ENCODE measurements at regions of chr11 and their contacts with region 1.

Region 1: DNA sequence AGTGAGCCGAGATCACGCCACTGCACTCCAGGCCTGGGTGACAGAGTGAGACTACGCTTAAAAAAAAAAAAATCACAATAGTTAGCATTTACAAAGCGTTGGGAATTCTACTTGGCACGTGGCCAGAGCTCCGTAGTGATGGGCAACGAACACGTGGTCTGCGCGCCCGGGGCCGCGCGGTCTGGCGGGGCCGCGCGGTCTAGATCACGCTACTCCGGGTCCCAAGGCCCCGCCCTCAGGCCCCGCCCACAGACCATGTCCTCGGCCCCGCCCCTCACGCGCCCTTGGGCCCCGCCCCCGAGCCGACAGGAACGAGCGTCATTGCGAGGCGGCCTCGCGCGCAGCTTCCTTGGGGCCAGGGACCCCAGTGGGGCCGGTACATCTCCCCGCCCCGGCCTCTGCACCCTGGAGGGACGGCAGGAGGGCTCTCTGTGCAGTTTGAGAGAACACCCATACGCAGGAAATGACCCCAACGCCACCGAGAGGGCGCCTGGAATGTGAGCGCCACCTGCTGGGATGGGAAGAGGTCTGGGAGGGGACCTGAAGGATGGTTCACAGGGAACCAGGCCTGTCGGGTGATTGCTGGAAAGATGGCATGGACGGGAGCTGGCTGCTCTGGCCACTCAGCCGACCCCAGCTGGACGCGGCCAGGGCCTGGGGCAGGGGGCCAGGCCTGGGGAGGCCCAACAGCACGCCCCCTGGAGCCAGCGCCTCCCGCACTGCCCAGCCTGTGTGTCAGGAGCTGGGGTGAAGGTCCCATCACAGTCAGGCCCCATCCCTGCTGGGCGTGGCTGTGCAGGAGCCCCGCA is 2.0 kb upstream of the PTDSS2 start:
- DNase-seq: peak; percentile 96 to 97
- H3K4me3 ChIP-seq: peak overlapping the region; percentile 39
- H3K4me3 Mint-ChIP-seq: peak overlapping the region; percentile 85
- H3K27ac Mint-ChIP-seq: peak overlapping the region; percentile 77
- H3K4me1 ChIP-seq: peaks cover 41% of the 10 kb centered on the region
- H3K4me1 Mint-ChIP-seq: peaks cover 32% of the 10 kb centered on the region
- H3K27me3 ChIP-seq: no peaks in the 10 kb centered on the region
- H3K27me3 Mint-ChIP-seq: no peaks in the 10 kb centered on the region
- CTCF ChIP-seq: peak; percentile 90 to 98

Region 2: DNA sequence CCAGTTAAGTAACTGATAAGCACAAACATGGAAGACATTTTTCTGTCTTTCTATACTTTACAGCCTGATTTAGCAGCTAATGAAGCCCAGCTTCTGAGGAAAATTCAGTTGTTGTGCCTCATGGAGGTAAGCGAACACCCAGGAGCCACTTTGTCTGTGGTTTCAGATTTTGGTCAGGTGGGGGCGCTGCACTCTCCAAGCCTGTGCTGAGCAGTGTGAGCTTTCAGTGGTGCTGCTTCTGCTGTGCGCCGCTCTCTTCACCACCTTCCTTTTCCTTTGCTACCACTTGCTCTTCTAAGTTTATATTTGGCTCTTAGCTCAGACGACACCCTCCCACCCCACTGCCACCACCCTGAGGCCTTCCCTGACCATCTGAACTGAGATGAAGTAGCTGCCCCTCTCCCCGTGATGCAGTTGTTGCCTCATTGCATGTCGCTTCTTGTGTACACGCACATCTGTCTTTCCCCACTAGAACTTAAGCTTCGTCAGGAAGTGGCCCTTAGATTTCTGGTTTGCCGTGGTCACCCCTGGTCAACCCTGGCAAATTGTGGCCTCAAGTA is 197.3 kb before region 1 on chr11:
- CTCF ChIA-PET with region 1: interaction called, 13 read pairs
- POLR2A ChIA-PET with region 1: no interaction called
- intact Hi-C with region 1: no loop called
- DNase-seq: peak; percentile 57 to 73
- H3K4me3 ChIP-seq: no peak overlapping the region
- H3K4me3 Mint-ChIP-seq: no peak overlapping the region
- H3K27ac Mint-ChIP-seq: no peak overlapping the region
- H3K4me1 ChIP-seq: no peaks in the 10 kb centered on the region
- H3K4me1 Mint-ChIP-seq: no peaks in the 10 kb centered on the region
- H3K27me3 ChIP-seq: no peaks in the 10 kb centered on the region
- H3K27me3 Mint-ChIP-seq: no peaks in the 10 kb centered on the region
- CTCF ChIP-seq: peak; percentile 54 to 66

Region 3: DNA sequence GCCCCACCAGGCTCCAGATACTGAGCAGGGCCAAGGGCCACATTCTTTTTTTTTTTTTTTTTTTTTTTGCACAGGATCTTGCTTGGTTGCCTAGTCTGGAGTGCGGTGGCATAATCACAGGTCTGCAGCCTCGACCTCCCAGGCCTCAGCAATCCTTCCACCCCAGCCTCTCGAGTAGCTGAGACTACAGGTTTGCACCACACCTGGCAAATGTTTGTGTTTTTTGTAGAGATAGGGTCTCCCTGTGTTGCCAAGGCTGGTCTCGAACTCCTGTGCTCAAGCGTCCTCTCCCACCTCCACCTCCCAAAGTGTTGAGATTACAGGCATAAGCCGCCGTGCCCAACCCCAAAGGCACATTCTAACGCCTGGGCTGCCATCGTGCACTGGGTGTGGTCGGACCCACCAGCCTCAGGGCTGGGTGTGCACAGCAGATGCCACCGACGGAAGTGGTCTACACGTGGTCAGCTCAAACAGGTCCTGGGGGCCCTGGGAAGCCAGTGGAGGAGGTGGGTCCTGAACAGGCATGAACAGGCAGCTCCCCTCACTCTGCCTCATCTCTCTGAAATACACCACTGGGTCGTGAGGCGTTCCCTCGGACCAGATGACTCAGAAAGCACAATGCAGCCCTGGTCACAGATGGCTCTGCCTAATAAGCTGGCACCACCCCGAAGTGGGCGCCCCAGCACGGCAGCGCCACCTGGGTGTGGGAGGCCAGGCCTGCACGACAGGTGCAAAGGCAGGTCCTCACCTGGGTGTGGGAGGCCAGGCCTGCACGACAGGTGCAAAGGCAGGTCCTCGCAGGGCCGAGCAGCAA is 84.0 kb before region 1 on chr11:
- CTCF ChIA-PET with region 1: interaction called, 14 read pairs
- POLR2A ChIA-PET with region 1: no interaction called
- intact Hi-C with region 1: loop called (anchors 10 kb)
- DNase-seq: peak; percentile 85 to 89
- H3K4me3 ChIP-seq: no peak overlapping the region
- H3K4me3 Mint-ChIP-seq: no peak overlapping the region
- H3K27ac Mint-ChIP-seq: no peak overlapping the region
- H3K4me1 ChIP-seq: peaks cover 8% of the 10 kb centered on the region
- H3K4me1 Mint-ChIP-seq: peaks cover 7% of the 10 kb centered on the region
- H3K27me3 ChIP-seq: no peaks in the 10 kb centered on the region
- H3K27me3 Mint-ChIP-seq: peaks cover 2% of the 10 kb centered on the region
- CTCF ChIP-seq: peak; percentile 54 to 62

Region 4: DNA sequence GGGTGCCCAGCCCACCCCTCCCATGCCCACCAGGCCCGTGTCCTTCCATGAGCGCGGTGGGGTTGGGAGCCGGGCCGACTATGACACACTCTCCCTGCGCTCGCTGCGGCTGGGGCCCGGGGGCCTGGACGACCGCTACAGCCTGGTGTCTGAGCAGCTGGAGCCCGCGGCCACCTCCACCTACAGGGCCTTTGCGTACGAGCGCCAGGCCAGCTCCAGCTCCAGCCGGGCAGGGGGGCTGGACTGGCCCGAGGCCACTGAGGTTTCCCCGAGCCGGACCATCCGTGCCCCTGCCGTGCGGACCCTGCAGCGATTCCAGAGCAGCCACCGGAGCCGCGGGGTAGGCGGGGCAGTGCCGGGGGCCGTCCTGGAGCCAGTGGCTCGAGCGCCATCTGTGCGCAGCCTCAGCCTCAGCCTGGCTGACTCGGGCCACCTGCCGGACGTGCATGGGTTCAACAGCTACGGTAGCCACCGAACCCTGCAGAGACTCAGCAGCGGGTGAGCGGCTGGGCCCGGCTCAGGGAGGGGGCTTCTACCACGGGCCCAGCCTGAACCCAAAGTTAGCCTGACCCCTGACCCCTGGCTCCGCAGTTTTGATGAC is 51.1 kb before region 1 on chr11:
- CTCF ChIA-PET with region 1: interaction called, 10 read pairs
- POLR2A ChIA-PET with region 1: interaction called, 10 read pairs
- intact Hi-C with region 1: loop called (anchors 10 kb)
- DNase-seq: no peak
- H3K4me3 ChIP-seq: no peak overlapping the region
- H3K4me3 Mint-ChIP-seq: no peak overlapping the region
- H3K27ac Mint-ChIP-seq: no peak overlapping the region
- H3K4me1 ChIP-seq: peaks cover 22% of the 10 kb centered on the region
- H3K4me1 Mint-ChIP-seq: peaks cover 8% of the 10 kb centered on the region
- H3K27me3 ChIP-seq: no peaks in the 10 kb centered on the region
- H3K27me3 Mint-ChIP-seq: no peaks in the 10 kb centered on the region
- CTCF ChIP-seq: no peak

Region 5: DNA sequence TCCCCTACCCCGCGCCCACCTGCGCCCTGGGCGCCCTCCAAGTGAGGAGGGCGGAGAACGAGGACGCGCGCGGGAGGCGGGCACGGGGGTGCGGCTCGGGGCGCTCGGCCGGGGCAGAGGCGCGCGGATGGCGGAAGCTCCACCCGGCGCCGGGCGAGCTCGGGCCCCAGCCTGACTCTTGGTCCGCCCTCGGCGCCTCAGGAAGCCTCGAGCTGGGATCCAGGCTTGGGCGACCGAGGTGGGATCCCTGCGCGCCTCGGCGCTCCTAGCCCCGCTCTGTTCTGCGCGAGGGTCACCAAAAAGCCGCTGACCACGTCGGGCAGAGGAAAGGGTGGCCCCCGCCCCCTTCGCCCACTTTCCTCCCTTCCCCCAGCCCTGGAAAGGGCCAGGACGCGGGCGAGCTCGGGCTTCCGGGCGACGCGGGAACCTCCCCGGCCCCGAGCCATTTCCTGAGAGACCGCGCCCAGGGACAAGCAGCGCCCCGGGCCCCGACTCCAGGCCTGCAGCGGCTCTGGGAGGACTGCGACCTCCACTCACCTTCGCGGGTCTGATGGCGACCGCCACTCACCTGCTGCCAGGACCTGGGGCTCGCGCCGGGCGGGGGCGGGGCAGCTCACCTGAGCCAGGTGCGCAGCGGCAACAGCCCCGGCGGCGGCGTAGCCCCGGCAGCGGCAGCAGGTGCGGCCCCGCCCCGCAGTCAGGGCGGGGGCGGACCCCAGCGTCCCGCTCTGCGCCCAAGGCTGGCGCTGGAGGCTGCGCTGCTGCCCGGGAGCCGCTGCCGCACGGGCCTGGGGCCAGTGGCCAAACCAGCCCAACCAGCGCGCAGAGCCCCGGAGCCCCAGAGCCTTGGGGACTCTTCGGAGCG is 31.1 kb before region 1 on chr11:
- CTCF ChIA-PET with region 1: interaction called, 43 read pairs
- POLR2A ChIA-PET with region 1: interaction called, 5 read pairs
- intact Hi-C with region 1: loop called (anchors 1 kb)
- DNase-seq: peak; percentile 87 to 94
- H3K4me3 ChIP-seq: peak overlapping the region; percentile 96
- H3K4me3 Mint-ChIP-seq: peak overlapping the region; percentile 82
- H3K27ac Mint-ChIP-seq: peak overlapping the region; percentile 89
- H3K4me1 ChIP-seq: peaks cover 23% of the 10 kb centered on the region
- H3K4me1 Mint-ChIP-seq: peaks cover 11% of the 10 kb centered on the region
- H3K27me3 ChIP-seq: no peaks in the 10 kb centered on the region
- H3K27me3 Mint-ChIP-seq: no peaks in the 10 kb centered on the region
- CTCF ChIP-seq: no peak

Region 6: DNA sequence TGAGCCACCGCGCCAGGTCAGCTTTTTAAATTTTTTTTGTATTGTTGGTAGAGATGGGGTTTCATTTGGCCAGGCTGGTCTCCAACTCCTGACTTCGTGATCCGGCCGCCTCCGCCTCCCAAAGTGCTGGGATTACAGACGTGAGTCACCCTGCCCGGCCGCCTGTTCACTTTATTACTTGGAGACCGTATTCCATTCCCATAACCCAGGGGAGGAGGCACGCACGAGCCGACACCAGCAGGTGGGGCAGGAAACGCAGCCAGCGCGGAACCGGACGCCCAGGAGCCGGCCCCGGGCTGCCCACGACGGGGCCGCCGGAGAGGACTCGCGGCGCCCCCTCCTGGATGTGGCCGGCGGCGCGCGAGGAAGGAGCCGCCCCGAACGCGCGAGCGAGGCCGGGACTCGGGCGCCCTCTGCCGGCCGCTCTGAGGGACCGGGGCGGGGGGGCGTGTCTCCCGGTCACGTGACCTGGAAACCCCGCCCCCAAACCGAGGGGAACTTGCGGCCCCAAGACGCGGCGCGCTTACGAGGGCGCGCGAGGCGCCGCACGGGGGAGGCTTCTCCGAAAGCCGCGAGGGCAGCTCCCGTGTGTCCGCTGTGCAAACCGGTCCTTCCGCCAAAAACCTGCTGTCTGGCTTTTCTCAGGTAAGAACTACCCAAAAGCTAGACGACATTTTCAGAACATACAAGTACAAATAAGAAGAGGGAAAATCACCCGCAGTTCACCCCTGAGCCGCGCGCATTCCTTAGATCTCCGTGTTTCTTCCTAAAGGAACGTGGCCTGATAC is 70.5 kb after region 1 on chr11:
- CTCF ChIA-PET with region 1: no interaction called
- POLR2A ChIA-PET with region 1: interaction called, 4 read pairs
- intact Hi-C with region 1: loop called (anchors 2 kb)
- DNase-seq: peak; percentile 93 to 94
- H3K4me3 ChIP-seq: peak overlapping the region; percentile 26
- H3K4me3 Mint-ChIP-seq: peak overlapping the region; percentile 68
- H3K27ac Mint-ChIP-seq: peak overlapping the region; percentile 81
- H3K4me1 ChIP-seq: peaks cover 10% of the 10 kb centered on the region
- H3K4me1 Mint-ChIP-seq: no peaks in the 10 kb centered on the region
- H3K27me3 ChIP-seq: no peaks in the 10 kb centered on the region
- H3K27me3 Mint-ChIP-seq: no peaks in the 10 kb centered on the region
- CTCF ChIP-seq: peak; percentile 52 to 86